ENCODE measurements at regions of chr21 and their contacts with region 1.

Region 1: DNA sequence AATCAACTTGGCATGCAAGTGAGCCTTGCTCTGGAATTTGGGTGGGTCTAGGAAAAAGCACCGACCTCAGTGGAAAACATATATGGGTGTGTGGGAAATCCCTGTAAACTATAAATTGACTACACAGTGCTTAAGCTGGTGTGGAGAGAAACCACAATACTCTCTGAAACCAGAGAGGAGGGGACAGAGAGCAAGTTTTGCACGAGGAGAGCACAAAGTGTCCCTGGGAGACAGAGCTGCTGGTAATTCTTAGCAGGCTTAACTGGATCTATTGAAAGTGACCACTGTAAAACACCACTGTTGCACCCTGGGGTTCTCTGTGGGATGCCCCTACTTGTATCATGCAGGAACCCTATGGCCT is 12.8 kb downstream of the KCNJ15 start:
- DNase-seq: no peak
- H3K4me3 Mint-ChIP-seq: peak overlapping the region; percentile 1
- H3K27ac Mint-ChIP-seq: peak overlapping the region; percentile 81
- H3K4me1 Mint-ChIP-seq: peaks cover 28% of the 10 kb centered on the region
- H3K27me3 Mint-ChIP-seq: peaks cover 5% of the 10 kb centered on the region

Region 2: DNA sequence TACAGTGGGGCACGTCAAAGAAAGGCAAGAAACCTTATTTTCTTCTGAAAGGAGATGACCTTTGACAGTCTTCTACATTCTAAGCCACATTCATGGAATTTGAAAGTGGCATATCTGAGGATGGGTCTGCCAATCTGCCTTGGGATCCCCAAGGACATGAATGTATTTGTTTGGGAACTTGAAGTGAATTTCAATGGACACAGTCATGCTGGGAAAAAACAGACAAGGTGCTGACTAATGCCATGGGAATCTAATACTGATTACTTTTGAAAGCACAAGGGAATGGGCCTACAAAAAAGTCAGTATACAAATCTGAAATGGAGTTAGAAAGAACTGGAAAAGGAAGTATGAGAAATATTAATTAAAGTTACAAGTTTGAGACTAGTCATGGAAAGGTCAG is 482.1 kb before region 1 on chr21:
- intact Hi-C with region 1: no loop called
- DNase-seq: no peak
- H3K4me3 Mint-ChIP-seq: no peak overlapping the region
- H3K27ac Mint-ChIP-seq: no peak overlapping the region
- H3K4me1 Mint-ChIP-seq: no peaks in the 10 kb centered on the region
- H3K27me3 Mint-ChIP-seq: no peaks in the 10 kb centered on the region

Region 3: GRCh38 chr21:38244885-38245545 is 24.5 kb before region 1 on chr21:
- intact Hi-C with region 1: loop called (anchors 1 kb)
- DNase-seq: peak; percentile 88
- H3K4me3 Mint-ChIP-seq: peak overlapping the region; percentile 38
- H3K27ac Mint-ChIP-seq: peak overlapping the region; percentile 89
- H3K4me1 Mint-ChIP-seq: peaks cover 30% of the 10 kb centered on the region
- H3K27me3 Mint-ChIP-seq: peaks cover 7% of the 10 kb centered on the region

Region 4: GRCh38 chr21:38300141-38300578 is 30.6 kb after region 1 on chr21:
- intact Hi-C with region 1: loop called (anchors 2 kb)
- DNase-seq: peak; percentile 66
- H3K4me3 Mint-ChIP-seq: peak overlapping the region; percentile 69
- H3K27ac Mint-ChIP-seq: peak overlapping the region; percentile 72
- H3K4me1 Mint-ChIP-seq: peaks cover 33% of the 10 kb centered on the region
- H3K27me3 Mint-ChIP-seq: peaks cover 2% of the 10 kb centered on the region

Region 5: GRCh38 chr21:38327984-38328383 is 58.4 kb after region 1 on chr21:
- intact Hi-C with region 1: loop called (anchors 1 kb)
- DNase-seq: no peak
- H3K4me3 Mint-ChIP-seq: peak overlapping the region; percentile 18
- H3K27ac Mint-ChIP-seq: peak overlapping the region; percentile 58
- H3K4me1 Mint-ChIP-seq: peaks cover 15% of the 10 kb centered on the region
- H3K27me3 Mint-ChIP-seq: peaks cover 2% of the 10 kb centered on the region

Region 6: DNA sequence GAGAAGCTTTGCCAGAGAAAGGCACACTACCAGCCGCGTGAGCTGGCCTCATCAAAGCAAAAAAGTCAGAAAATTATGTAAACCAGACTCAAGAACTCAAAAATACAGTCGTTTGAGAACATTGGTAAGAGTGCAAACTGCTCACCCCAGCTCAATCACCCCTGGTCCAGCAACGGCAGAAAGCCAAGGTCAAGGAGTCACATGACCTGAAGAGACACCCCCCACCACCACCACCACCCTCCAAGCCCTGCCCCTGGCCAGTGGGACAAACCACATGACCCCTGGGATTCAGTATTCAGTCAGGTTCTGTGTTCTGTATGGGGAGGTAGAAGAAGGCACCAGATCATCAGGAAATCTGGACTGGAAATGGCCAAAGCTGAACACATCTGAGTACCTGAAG is 318.5 kb after region 1 on chr21:
- intact Hi-C with region 1: no loop called
- DNase-seq: no peak
- H3K4me3 Mint-ChIP-seq: no peak overlapping the region
- H3K27ac Mint-ChIP-seq: no peak overlapping the region
- H3K4me1 Mint-ChIP-seq: no peaks in the 10 kb centered on the region
- H3K27me3 Mint-ChIP-seq: peaks cover 7% of the 10 kb centered on the region

Measured in activated CD4-positive, alpha-beta T cell treated with anti-CD3 and anti-CD28 coated beads, Interleukin-2, amount 10 ng/mL, durations not matched to agents 24 days and 14 days (primary cell).